ENCODE measurements at regions of chr3 and their contacts with region 1.

Region 1: GRCh38 chr3:41173926-41174885 is 25.1 kb upstream of the CTNNB1 start:
- DNase-seq: no peak
- ATAC-seq: no peak
- H3K4me3 ChIP-seq: no peak overlapping the region
- H3K4me3 Mint-ChIP-seq: no peak overlapping the region
- H3K27ac ChIP-seq: no peak overlapping the region
- H3K27ac Mint-ChIP-seq: no peak overlapping the region
- H3K4me1 ChIP-seq: no peaks in the 10 kb centered on the region
- H3K4me1 Mint-ChIP-seq: no peaks in the 10 kb centered on the region
- H3K27me3 ChIP-seq: peaks cover 2 to 4% of the 10 kb centered on the region in 2 experiments
- H3K27me3 Mint-ChIP-seq: peaks cover 17% of the 10 kb centered on the region
- CTCF ChIP-seq: no peak

Region 2: GRCh38 chr3:41137686-41138111 is 36.5 kb before region 1 on chr3:
- CTCF ChIA-PET with region 1: no interaction called
- POLR2A ChIA-PET with region 1: no interaction called
- intact Hi-C with region 1: loop called in 1 of 2 experiments (anchors 1 kb)
- DNase-seq: no peak
- ATAC-seq: no peak
- H3K4me3 ChIP-seq: no peak overlapping the region
- H3K4me3 Mint-ChIP-seq: no peak overlapping the region
- H3K27ac ChIP-seq: no peak overlapping the region
- H3K27ac Mint-ChIP-seq: no peak overlapping the region
- H3K4me1 ChIP-seq: no peaks in the 10 kb centered on the region
- H3K4me1 Mint-ChIP-seq: no peaks in the 10 kb centered on the region
- H3K27me3 ChIP-seq: no peaks in the 10 kb centered on the region
- H3K27me3 Mint-ChIP-seq: no peaks in the 10 kb centered on the region
- CTCF ChIP-seq: no peak

Region 3: DNA sequence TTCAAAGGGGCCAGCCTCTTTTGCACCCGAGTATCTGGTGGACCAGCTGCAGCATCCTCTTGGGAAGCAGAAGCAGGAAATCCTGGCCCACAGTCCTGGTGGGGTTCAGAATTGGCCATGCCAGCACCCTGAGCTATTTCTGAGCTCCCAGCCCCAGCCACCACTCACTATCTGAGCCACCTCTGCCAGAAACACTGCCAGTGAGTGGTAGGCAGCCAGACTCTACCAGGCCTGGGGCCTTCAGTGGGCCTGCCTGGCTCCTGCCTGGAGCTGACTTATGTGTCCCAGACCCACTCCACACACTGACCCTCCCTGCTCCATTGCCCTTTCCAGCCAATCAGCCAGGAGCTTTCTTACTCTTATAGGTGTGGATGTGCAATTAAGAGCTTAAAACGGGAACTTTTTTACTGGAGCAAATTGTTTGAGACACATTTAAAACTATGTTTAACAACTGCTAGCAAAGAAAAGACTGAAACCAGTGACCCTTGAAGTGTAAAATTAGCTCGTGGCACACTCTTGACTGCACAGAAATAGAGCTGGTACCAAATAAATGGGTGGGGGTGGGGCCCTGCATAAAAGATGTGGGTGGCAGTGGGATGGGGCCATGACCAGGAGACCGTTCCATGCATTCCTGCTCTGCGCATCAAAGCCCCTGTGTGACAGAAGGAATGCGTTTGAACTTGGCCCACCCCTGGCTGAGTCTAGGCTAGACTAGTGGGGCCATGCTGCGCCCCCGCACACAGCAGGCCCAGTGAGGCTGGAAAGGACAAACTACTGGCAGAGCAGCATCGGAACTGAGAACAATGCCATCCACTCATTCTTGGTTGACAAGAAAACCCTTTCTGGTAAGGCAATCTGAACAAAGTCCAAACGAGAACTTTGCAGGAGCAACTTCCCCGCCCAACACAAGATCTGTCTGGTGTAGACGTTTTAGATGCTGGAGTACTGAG is 73.1 kb after region 1 on chr3:
- CTCF ChIA-PET with region 1: no interaction called
- POLR2A ChIA-PET with region 1: no interaction called
- intact Hi-C with region 1: no loop called
- DNase-seq: no peak
- ATAC-seq: no peak
- H3K4me3 ChIP-seq: no peak overlapping the region
- H3K4me3 Mint-ChIP-seq: no peak overlapping the region
- H3K27ac ChIP-seq: no peak overlapping the region
- H3K27ac Mint-ChIP-seq: no peak overlapping the region
- H3K4me1 ChIP-seq: no peaks in the 10 kb centered on the region
- H3K4me1 Mint-ChIP-seq: no peaks in the 10 kb centered on the region
- H3K27me3 ChIP-seq: no peaks in the 10 kb centered on the region
- H3K27me3 Mint-ChIP-seq: no peaks in the 10 kb centered on the region
- CTCF ChIP-seq: no peak

Measured in CD8-positive, alpha-beta T cell (primary cell).